ENCODE measurements at regions of chr7 and their contacts with region 1.

Region 1: DNA sequence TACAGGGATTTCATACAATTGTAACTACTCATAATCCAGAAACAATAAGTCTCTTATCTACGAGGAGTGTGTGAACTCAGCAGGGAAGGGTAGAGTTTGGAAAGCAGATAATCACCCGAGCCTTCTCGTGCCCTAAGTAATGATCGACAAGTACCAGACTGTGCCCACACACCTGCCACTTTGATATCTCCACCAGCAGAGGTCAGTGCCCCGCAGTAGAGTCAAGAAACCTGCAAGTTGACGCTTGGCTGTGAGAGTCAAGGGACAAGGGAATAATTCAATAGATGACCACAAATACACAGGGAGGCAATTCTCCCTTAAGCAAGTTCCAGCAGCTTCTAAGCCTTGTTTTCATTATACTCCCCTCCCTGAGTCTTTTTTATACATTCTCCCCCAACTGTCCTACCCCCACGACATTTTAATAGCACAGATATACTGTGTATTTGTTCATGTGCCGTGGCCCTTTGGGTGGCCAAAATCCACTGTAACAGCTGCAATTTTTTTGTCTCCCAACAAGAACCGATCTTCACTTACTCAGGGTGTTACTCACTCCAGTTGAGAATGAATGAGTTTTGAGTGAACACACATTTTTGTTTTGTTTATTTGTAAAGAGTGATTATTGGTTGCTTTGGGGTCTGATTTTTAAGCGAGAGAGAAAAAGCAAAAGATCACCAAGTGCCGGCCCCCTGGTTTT is 106.9 kb upstream of the RHEB start:
- DNase-seq: peak; percentile 56
- H3K4me3 ChIP-seq: no peak overlapping the region
- H3K27ac ChIP-seq: no peak overlapping the region
- H3K4me1 ChIP-seq: peaks cover 9 to 15% of the 10 kb centered on the region in 2 experiments; a peak in 2 of 4 replicates
- H3K27me3 ChIP-seq: no peaks in the 10 kb centered on the region
- CTCF ChIP-seq: peak; percentile 62
- EP300 ChIP-seq: no peak
- RAD21 ChIP-seq: peak; percentile 76

Region 2: DNA sequence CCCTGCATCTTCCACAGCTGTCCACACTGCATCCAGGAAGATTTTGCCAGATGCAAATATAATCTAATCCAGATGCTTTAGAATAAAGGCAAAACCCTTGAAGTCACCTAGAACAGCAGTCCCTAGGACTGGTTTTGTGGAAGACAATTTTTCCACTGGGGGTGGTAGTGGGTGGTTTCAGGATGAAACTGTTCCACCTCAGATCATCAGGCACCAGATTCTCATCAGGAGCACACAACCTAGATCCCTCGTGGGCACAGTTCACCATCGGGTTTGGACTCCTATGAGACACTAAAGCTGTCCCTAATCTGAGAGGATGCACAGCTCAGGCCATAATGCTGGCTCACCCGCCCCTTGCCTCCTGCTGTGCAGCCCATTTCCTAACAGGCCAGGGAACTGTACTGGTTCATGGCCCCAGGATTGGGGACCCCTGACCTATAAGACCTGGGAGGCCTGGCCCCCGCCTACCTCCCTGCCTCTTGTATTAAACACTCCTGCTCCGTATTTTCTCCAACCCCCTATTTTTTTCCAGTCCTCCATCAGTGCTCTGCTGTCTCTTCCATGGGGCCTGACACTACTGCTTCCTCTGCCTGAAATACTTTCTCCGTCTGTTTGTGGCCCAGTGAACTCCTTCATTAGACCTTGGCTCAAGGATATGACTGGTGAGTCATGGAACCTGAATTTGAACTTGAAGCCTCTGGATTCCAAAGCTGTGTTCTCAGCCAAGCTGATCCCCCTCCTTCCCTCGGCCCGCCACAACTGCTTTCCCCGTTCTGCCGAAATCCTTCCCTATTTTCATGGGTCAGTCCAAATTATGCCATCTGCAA is 27.0 kb before region 1 on chr7:
- CTCF ChIA-PET with region 1: interaction called, 11 read pairs
- POLR2A ChIA-PET with region 1: no interaction called
- DNase-seq: peak; percentile 69
- H3K4me3 ChIP-seq: peak overlapping the region in 1 of 2 experiments; percentile 24; a peak in 1 of 4 replicates
- H3K27ac ChIP-seq: peak overlapping the region; percentile 83 to 95
- H3K4me1 ChIP-seq: peaks cover 10 to 34% of the 10 kb centered on the region in 2 experiments
- H3K27me3 ChIP-seq: no peaks in the 10 kb centered on the region
- CTCF ChIP-seq: peak; percentile 44
- EP300 ChIP-seq: peak; percentile 5 to 92; a peak in 3 of 4 replicates
- RAD21 ChIP-seq: no peak; the same call in 1 of the 2 replicates

Measured in SK-N-SH (cell line).